ENCODE measurements at regions of chr5 and their contacts with region 1.

Region 1: DNA sequence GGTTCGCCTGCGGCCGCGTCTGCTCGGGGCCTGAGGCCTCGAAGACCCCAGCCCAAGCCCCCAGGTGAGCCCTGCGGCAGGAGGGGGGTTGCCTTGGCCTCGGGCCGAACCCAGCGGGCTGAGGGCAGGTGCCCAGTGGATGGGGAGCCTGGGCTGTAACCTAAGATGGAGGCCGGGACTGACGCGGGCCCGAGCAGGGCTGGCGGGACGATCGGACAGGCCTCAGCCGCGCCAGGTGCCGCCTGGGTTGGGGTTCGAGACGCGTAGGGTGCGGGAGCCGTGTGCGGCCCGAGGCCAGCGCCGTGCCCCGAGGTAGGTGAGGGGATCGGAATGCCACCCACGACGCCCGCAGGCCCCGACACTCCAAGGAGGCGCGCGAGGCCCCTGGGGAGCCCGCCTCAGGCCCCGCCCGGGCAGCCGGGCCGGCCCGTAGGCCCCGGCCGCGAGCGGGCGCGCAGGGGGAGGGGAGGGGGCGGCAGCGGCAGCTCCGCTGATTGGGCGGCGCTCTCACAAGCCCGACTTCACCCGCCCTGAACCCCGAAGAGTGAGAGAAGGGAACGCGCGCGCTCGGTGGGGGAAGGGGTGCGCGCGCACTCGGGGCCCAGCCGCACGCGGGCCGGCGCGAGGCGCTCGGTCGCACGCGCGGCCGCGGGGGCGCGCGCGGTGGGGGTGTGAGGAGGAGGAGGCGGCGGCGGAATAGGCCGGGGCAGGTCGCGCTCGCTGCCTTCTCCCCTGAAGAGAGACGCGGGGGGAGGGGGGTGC is at the start of gene NSD1:
- DNase-seq: peak; percentile 89
- H3K4me3 ChIP-seq: peak within 1 kb of the TSS; percentile 69 to 78 (median 72)
- H3K27ac ChIP-seq: peak within 1 kb of the TSS; percentile 90 to 97 (median 94)
- H3K4me1 ChIP-seq: peaks cover 26 to 39% (median 33%) of the 10 kb centered on the region in 4 donors
- H3K27me3 ChIP-seq: no peaks in the 10 kb centered on the region
- CTCF ChIP-seq: no peak
- EP300 ChIP-seq: no peak
- POLR2A ChIP-seq: no peak
- total RNA-seq, gene NSD1: 32.6 to 84.9 (median 60.7) TPM

Region 2: GRCh38 chr5:177113566-177114424 is 19.5 kb before region 1 on chr5:
- in situ Hi-C with region 1: no loop called
- intact Hi-C with region 1: loop called (anchors 2 kb)
- DNase-seq: peak; percentile 81
- H3K4me3 ChIP-seq: no peak overlapping the region
- H3K27ac ChIP-seq: peak overlapping the region in 2 of 4 donors; percentile 26 to 41
- H3K4me1 ChIP-seq: peaks cover 0 to 20% (median 8%) of the 10 kb centered on the region in 4 donors
- H3K27me3 ChIP-seq: no peaks in the 10 kb centered on the region
- CTCF ChIP-seq: peak; percentile 96 to 99 (median 98)
- EP300 ChIP-seq: no peak
- POLR2A ChIP-seq: no peak

Region 3: GRCh38 chr5:177296581-177296980 is 163.3 kb after region 1 on chr5:
- in situ Hi-C with region 1: loop called in 1 of 4 experiments (anchors 25 kb)
- intact Hi-C with region 1: no loop called
- DNase-seq: no peak
- H3K4me3 ChIP-seq: no peak overlapping the region
- H3K27ac ChIP-seq: peak overlapping the region in 1 of 4 donors; percentile 55
- H3K4me1 ChIP-seq: peaks cover 25 to 48% (median 31%) of the 10 kb centered on the region in 4 donors
- H3K27me3 ChIP-seq: no peaks in the 10 kb centered on the region
- CTCF ChIP-seq: no peak
- EP300 ChIP-seq: no peak
- POLR2A ChIP-seq: no peak